Posterior vena cava (tissue), 2 donors: ENCODE measurements at regions of chr1 and their contacts with region 1.

Region 1: GRCh38 chr1:27894521-27894920 is 22.2 kb downstream of the THEMIS2 start:
- DNase-seq: no peak

Region 2: GRCh38 chr1:27496604-27497155 is 397.8 kb before region 1 on chr1:
- intact Hi-C with region 1: no loop called
- DNase-seq: peak; percentile 81

Region 3: DNA sequence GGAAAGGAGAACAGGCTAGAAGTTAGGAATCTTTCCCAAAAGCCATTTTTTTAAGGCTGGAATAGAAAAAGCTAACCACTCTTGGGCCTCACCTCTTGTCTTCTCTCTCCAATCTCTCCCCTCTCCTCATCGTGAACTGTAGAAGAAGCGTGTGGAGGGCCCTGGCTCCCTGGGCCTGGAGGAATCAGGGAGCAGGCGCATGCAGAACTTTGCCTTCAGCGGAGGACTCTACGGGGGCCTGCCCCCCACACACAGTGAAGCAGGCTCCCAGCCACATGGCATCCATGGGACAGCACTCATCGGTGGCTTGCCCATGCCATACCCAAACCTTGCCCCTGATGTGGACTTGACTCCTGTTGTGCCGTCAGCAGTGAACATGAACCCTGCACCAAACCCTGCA is 44.6 kb before region 1 on chr1:
- intact Hi-C with region 1: no loop called
- DNase-seq: no peak

Region 4: DNA sequence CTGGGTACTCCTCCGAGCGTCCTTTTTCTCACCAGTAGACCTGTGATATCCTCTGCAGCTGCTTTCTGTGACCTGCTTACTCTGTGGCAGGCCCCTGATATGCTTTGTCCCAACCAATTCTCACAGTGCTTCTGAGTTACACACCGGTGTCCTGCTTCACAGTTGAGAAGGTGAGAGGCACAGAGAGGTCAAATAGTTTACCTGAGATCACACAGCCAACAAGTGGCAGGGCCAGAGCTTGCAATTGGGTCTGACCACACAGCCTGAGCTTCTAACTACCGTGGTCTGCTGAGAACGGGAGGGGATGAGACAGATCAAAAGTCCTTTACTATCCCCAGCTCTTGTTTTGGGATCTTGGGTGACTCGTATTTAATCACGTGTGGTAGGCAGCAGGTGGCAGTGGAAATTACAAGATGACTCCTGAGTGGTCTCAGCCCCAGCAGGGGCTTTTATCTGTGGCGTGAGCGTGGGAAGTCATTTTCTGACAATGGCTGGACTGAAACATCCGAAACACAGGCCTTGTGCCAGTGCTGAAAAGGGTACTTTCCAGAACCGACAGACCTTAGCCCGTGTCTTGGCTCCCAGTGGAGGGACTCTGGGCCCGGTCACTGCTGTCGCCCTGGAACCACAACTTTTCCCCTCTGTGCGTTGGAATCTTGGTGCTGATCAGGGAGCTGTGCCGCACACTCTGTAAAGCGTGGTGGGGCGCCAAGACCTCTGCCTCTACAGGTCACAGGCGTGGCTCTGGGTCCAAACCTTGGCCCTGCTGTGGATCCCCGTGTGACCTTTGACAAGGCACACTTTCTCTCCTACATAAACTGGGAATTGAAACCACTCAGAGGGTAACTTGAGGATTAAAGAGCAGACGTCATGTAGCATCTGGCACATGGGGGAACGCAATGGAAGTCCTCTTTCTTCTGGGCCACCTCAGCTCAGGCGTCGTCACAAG is 10.2 kb before region 1 on chr1:
- intact Hi-C with region 1: loop called in 1 of 2 experiments (anchors 1 kb)
- DNase-seq: no peak